ENCODE measurements at regions of chr12 and their contacts with region 1.

Region 1: DNA sequence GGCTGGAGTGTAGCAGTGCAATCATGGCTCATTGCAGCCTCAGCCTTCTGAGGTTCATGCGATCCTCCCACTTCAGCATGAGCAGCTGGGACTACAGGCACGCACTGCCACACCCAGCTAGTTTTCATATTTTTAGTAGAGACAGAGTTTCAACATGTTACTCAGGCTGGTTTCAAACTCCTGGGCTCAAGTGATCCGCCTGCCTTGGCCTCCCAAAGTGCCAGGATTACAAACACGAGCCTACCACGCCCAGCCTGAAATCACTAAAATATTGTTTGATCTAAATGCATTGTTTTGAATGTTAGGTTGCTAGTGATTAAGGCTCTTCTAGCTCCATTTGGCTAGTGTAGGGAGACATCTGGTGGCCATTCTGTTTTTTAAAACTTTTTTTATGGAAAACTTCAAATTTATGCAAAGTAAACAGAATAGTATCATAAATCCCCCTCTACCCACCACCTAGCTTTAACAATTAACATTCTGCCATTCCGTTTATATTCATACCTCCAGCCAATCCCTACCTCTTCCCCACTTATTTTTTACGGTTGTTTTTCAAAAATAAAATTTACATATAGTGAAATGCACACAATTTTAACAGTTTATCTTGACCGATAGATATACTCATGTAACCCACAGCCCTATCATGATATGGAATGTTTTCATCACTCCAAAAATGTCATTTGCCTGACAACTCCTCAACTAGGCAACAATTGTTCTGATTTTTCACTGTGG is 37.8 kb downstream of the MYO1H start:
- DNase-seq: no peak
- ATAC-seq: no peak
- H3K4me3 Mint-ChIP-seq: no peak overlapping the region
- H3K27ac Mint-ChIP-seq: no peak overlapping the region
- H3K4me1 Mint-ChIP-seq: no peaks in the 10 kb centered on the region
- H3K27me3 Mint-ChIP-seq: peaks cover 4% of the 10 kb centered on the region
- CTCF ChIP-seq: no peak

Region 2: DNA sequence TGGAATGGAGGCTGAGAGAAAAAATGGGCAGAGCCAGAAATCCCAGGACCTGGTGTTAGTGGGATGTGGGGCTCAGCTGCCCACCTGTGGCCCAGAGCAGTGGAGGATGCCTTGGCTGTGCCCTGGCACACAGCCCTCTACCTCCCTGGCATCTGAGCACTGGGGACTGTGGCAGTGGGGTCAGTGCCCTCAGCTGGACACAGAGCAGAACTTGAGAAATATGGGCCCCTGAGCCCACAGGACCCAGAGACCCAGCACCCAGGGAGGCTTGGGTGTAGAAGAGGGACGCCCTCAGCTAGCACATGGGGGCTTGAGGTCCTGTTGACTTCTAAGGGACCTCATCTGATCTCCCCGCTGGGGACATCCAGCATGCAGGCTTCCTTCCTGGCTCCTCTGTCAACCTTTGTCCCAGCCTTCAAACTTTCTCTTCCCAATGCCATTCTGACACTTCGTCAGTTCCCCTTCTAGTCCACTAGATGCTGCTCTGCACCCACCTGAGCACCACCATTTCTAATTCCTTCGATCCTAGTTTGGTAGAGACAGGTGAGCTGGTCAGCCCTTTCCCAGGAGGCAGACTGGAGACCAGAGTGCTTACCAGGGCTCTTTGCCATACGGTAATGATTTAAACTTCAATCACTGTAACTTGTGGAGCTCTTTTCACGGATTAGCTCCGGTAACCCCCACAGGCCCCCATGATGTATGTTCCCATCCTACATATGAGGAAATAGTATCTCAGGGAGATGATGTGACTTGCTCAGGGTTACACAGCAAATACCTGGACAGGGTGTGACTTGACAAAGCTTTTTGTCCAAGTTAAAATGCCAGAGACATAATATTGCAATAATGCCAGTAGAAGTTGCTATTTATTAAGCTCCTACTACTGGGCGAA is 1467.3 kb before region 1 on chr12:
- CTCF ChIA-PET with region 1: no interaction called
- POLR2A ChIA-PET with region 1: no interaction called
- intact Hi-C with region 1: loop called (anchors 2 kb)
- DNase-seq: no peak
- ATAC-seq: no peak
- H3K4me3 Mint-ChIP-seq: no peak overlapping the region
- H3K27ac Mint-ChIP-seq: no peak overlapping the region
- H3K4me1 Mint-ChIP-seq: peaks cover 2% of the 10 kb centered on the region
- H3K27me3 Mint-ChIP-seq: peaks cover 48% of the 10 kb centered on the region
- CTCF ChIP-seq: no peak

Region 3: GRCh38 chr12:108884116-108885012 is 501.1 kb before region 1 on chr12:
- CTCF ChIA-PET with region 1: no interaction called
- POLR2A ChIA-PET with region 1: no interaction called
- intact Hi-C with region 1: loop called (anchors 10 kb)
- DNase-seq: peak; percentile 43
- ATAC-seq: peak; percentile 89
- H3K4me3 Mint-ChIP-seq: no peak overlapping the region
- H3K27ac Mint-ChIP-seq: no peak overlapping the region
- H3K4me1 Mint-ChIP-seq: no peaks in the 10 kb centered on the region
- H3K27me3 Mint-ChIP-seq: no peaks in the 10 kb centered on the region
- CTCF ChIP-seq: no peak